ENCODE measurements at regions of chr17 and their contacts with region 1.

Region 1: GRCh38 chr17:74457146-74457819 is 9.2 kb upstream of the CD300A start:
- DNase-seq: peak; percentile 74
- CTCF ChIP-seq: peak; percentile 99

Region 2: GRCh38 chr17:74373838-74374606 is 83.3 kb before region 1 on chr17:
- CTCF ChIA-PET with region 1: interaction called, 18 read pairs
- POLR2A ChIA-PET with region 1: no interaction called
- DNase-seq: no peak
- CTCF ChIP-seq: no peak

Region 3: DNA sequence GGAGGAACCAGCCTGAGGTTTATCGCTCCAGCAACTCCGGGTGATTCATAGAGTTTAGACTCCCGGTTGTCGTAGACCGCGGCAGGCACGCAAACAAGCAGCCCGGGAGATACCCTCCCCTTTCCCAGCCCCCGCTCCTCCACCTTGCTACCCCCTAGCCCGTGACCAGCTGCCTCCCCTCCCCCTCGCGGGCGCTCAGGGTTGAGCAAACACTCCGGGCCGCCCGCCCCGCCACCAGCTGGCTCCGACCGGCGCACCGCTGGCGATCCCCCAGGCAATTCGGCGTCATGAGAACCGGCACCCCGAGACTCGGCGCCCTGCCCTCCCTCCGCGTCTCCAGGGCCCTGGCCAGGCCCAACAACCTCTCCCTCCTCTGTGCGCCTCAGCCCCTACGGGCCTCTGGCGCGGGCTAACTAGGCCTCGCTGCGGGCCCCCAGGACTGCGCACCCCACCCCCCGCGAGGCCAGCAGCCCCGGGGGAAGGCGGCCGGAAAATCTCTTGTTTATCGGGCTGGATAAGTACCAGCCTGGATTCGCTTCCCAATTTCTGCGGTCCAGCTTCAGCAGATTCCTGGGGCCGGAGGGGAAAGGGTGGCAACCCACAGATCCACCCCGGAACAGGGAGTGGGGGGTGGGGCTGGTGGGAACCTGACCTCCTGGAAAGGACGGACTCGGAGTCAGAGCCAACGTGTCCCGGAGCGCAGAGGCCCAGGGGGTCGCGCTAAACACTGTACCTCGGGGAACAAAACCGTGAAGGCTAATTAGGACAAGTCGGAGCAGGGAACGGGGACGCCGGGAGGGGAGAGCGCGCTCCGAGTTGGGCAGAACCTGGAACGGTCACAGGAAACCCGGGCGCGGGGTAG is 26.3 kb before region 1 on chr17:
- CTCF ChIA-PET with region 1: interaction called, 20 read pairs
- POLR2A ChIA-PET with region 1: no interaction called
- DNase-seq: peak; percentile 71
- CTCF ChIP-seq: no peak

Region 4: DNA sequence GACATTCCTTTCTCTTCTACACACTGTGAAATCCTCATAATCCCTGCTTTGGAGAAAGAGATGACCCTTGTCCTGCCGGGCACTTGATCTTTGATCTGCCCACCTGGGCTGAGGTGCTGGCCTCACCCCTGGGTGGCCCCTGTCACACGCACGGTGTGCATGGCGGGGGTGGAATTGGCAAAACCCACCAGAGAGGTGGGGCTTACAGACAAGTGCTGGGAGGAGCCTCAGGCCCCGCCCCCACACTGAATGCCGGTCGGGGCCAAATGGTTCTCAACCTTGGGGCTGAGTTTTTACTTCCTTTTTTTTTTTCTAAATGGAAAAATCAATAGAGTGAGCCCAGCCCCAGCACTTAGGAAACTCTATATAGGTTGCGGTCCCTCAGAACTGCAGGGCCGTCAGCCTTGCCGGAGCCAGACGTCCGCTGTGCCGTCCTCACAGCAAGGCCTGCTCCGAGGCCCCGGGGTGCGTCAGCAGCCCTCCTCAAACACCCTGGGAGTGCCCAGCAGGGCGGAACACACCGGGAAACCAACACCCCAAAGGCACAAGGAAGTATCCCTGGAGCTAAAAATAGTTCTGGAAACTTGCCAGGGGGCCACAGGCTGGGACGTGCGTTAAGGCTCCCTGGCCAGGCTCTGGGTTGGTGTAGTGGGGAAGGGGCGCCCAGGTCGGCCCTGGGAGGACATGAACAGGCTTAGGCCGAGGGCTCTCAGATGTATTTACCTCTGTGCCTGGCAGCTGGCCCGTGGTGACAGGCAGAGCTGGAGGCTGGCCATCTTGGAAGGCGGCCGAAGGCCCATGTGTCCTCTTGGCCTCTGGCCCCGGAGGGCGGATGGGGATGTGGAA is 14.4 kb before region 1 on chr17:
- CTCF ChIA-PET with region 1: interaction called, 52 read pairs
- POLR2A ChIA-PET with region 1: interaction called, 6 read pairs
- DNase-seq: peak; percentile 80
- CTCF ChIP-seq: no peak

Region 5: GRCh38 chr17:74513987-74514631 is 56.8 kb after region 1 on chr17:
- CTCF ChIA-PET with region 1: interaction called, 13 read pairs
- POLR2A ChIA-PET with region 1: no interaction called
- DNase-seq: peak; percentile 18
- CTCF ChIP-seq: no peak

Region 6: DNA sequence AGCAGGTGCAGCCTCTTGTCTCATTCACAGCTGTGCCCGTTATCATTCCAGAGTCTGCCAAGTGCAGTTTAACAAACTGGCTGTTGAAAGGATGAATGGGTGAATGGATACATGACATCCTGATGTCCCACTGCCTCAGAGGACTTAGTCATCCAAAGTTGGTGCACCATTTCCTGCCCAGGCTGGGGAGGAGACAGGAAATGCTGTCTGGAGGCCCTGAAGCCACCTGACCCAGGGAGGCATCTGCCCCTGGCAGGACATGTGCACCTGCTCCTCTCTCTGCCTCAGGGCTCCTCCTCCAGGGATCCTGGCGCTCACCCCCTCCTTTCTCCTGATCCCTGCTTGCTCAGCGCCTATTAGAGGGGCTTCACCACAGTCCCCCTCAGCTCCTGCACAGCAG is 90.5 kb after region 1 on chr17:
- CTCF ChIA-PET with region 1: no interaction called
- POLR2A ChIA-PET with region 1: no interaction called
- DNase-seq: no peak
- CTCF ChIP-seq: no peak

Region 7: GRCh38 chr17:74631468-74632450 is 174.5 kb after region 1 on chr17:
- CTCF ChIA-PET with region 1: no interaction called
- POLR2A ChIA-PET with region 1: no interaction called
- DNase-seq: peak; percentile 56
- CTCF ChIP-seq: no peak